Activated CD4-positive, alpha-beta memory T cell treated with anti-CD3 and anti-CD28 coated beads, Interleukin-2, amount 10 ng/mL, durations not matched to agents 7 days and 5 days (primary cell): ENCODE measurements at regions of chr6 and their contacts with region 1.

Region 1: DNA sequence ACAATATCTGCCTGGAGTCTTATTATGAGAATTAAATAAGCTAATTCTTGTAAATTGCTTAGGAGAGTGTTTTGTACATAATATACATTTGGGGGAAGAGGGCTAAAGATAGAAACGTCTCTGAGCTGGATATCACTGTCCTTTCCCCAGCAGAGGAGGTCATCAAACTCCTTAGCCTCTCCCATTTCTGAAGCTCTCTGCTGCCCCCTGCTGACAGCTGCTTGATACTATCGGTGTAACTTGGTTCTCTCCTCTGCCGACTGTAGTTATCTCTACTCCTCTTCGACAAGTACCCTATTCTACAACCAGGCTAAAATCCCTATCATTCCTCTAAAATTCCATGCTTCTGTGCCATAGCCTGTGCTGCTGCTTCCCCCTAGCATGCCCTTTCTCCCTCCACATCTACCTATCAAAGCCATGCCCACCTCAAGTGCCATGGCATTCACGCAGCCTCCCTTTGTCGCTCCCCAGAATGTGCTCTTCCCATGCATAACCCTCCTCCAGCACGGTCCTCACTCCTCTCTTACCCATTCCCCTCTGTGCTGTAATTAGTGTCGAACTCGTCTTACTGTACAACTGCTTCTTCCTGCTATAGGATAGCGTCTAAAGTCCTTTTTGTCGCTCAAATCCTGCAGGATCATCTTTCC is 101.2 kb downstream of the EPM2A start:
- DNase-seq: peak; percentile 79
- H3K4me3 Mint-ChIP-seq: no peak overlapping the region
- H3K27ac Mint-ChIP-seq: no peak overlapping the region
- H3K4me1 Mint-ChIP-seq: no peaks in the 10 kb centered on the region
- H3K27me3 Mint-ChIP-seq: no peaks in the 10 kb centered on the region

Region 2: DNA sequence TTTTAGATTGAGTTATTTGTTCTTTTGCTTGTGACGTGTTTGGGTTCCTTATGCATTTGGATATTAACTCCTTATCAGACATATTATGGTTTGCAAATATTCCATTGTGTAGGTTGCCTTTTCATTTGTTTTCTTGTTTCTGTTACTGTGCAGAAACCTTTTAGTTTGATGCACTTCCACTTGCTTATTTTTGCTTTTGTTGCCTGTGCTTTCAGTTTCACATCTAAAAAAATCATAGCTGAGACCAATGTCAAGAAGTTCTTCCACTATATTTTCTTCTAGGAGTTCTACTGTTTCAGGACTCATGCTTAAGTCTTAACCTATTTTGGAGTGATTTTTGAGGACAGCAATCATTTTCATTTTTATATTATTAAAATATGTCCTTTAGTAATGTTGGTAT is 12.3 kb before region 1 on chr6:
- CTCF ChIA-PET with region 1: interaction called, 16 read pairs
- POLR2A ChIA-PET with region 1: interaction called, 3 read pairs
- DNase-seq: no peak
- H3K4me3 Mint-ChIP-seq: no peak overlapping the region
- H3K27ac Mint-ChIP-seq: no peak overlapping the region
- H3K4me1 Mint-ChIP-seq: peaks cover 1% of the 10 kb centered on the region
- H3K27me3 Mint-ChIP-seq: no peaks in the 10 kb centered on the region

Region 3: DNA sequence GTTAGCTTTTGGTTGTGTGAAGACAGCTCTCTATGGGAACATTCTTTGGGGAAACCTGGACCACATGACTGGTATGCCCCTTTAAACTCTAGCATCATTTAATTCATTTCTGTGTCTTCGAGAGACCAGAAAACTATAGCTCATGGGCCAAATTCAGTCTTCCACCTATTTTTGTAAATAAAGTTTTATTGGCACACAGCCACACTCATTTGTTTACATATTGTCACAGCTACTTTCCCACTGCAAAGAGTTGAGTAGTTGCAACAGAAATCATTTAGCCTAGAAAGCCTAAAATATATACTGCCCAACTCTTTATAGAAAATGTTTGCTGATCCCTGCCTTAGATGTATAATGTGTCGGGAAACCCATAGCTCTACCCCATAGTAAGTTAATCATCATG is 15.4 kb after region 1 on chr6:
- CTCF ChIA-PET with region 1: interaction called, 12 read pairs
- POLR2A ChIA-PET with region 1: no interaction called
- DNase-seq: no peak
- H3K4me3 Mint-ChIP-seq: no peak overlapping the region
- H3K27ac Mint-ChIP-seq: no peak overlapping the region
- H3K4me1 Mint-ChIP-seq: no peaks in the 10 kb centered on the region
- H3K27me3 Mint-ChIP-seq: no peaks in the 10 kb centered on the region